ENCODE measurements at regions of chr1 and their contacts with region 1.

Region 1: GRCh38 chr1:10494754-10495474 is 20.2 kb downstream of the PEX14 start:
- DNase-seq: peak; percentile 52 to 92 (median 70)
- ATAC-seq: peak; percentile 94
- H3K4me3 ChIP-seq: peak overlapping the region in 1 of 2 donors; percentile 9
- H3K27ac ChIP-seq: peak overlapping the region in 1 of 2 donors; percentile 37
- H3K4me1 ChIP-seq: peaks cover 10 to 17% of the 10 kb centered on the region in 2 donors
- H3K27me3 ChIP-seq: no peaks in the 10 kb centered on the region
- CTCF ChIP-seq: peak; percentile 93 to 96

Region 2: DNA sequence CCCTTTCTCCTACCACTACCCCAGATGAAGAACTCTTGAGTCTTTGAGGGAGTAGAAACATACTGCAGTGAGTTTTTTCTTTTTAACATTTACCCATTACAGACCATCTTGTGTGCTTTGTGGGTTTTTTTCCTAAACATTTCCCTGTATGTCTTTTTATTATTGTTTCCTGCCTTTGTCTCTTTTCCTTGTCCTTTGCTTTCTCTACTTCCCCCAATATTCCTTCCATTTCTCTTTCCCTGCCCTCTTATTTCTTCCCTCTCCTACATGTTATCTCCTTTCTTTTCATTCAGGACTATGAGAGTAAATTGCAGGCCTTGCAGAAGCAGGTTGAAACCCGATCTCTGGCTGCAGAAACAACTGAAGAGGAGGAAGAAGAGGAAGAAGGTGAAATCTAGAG is 175.2 kb before region 1 on chr1:
- intact Hi-C with region 1: no loop called
- DNase-seq: no peak
- ATAC-seq: no peak
- H3K4me3 ChIP-seq: no peak overlapping the region
- H3K27ac ChIP-seq: no peak overlapping the region
- H3K4me1 ChIP-seq: no peaks in the 10 kb centered on the region
- H3K27me3 ChIP-seq: no peaks in the 10 kb centered on the region
- CTCF ChIP-seq: no peak

Region 3: DNA sequence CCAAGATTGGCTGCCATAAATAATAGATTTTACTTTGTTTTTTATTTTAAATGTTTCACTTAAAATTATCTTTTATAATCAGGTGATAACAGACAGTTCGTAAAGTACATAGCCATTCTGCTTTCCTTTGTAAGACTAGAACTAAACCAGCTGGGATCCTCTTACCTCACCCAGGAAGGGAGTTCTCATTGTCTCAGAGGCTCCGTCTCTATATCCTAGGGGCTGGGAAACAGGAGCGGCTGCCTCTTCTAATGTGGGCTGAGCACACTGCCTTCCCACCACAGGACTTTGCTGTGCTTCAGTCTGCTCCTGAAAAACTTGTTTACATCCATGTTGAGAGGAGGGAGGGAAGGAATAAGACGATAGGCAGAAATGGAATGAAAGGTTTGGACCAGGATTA is 141.6 kb before region 1 on chr1:
- intact Hi-C with region 1: no loop called
- DNase-seq: no peak
- ATAC-seq: no peak
- H3K4me3 ChIP-seq: no peak overlapping the region
- H3K27ac ChIP-seq: no peak overlapping the region
- H3K4me1 ChIP-seq: no peaks in the 10 kb centered on the region
- H3K27me3 ChIP-seq: no peaks in the 10 kb centered on the region
- CTCF ChIP-seq: no peak

Region 4: GRCh38 chr1:10430216-10431069 is 64.5 kb before region 1 on chr1 and contains the start of gene CENPS:
- intact Hi-C with region 1: loop called in 1 of 2 experiments (anchors 10 kb)
- DNase-seq: peak; percentile 94 to 97 (median 94)
- ATAC-seq: peak; percentile 95
- H3K4me3 ChIP-seq: peak within 1 kb of the TSS; percentile 85 to 87
- H3K27ac ChIP-seq: peak within 1 kb of the TSS; percentile 2 to 74
- H3K4me1 ChIP-seq: peaks cover 7 to 26% of the 10 kb centered on the region in 2 donors
- H3K27me3 ChIP-seq: no peaks in the 10 kb centered on the region
- CTCF ChIP-seq: peak; percentile 94 to 96
- polyA plus RNA-seq, gene CENPS: 18.1 to 23.1 (median 22.2) TPM

Region 5: DNA sequence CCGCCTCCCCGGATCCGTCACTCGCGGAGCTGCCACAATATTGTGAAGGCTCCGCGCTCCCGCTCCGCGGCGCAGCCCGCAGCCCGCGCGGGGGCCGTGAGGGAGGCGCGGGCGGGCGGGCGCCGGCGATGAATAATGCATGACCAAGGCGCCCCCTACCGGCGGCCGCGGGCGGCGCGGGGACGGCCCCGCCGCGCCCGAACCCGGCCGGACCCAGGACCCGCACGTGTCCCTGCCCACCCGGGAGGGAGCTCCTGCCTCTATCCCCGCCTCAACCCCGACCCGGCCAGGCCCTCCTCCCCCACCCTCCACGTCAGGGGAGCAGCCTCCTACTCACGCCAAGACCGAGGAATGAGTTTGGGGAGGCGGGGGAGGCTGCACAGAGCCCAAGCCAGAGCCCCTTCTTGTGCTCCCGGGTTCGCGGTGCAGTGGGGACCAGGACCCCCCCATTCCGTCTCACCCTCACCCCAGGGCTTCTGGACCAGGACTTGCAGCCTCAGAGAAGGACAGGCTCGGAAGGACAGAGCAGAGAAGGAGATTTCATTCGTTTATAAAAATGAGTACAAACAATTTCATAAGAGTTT is 372.3 kb after region 1 on chr1:
- intact Hi-C with region 1: loop called in 1 of 2 experiments (anchors 10 kb)
- DNase-seq: peak; percentile 39 to 90 (median 63)
- ATAC-seq: peak; percentile 96
- H3K4me3 ChIP-seq: peak overlapping the region; percentile 19 to 26
- H3K27ac ChIP-seq: no peak overlapping the region
- H3K4me1 ChIP-seq: peaks cover 0 to 15% of the 10 kb centered on the region in 2 donors
- H3K27me3 ChIP-seq: peaks cover 5 to 74% of the 10 kb centered on the region in 2 donors
- CTCF ChIP-seq: peak; percentile 73 to 80

Measured in left lung (tissue), 14 donors.